ENCODE measurements at regions of chr1 and their contacts with region 1.

Region 1: GRCh38 chr1:72284348-72285073 is 2.2 kb upstream of the NEGR1 start:
- DNase-seq: peak; percentile 12
- H3K4me3 Mint-ChIP-seq: no peak overlapping the region
- H3K27ac Mint-ChIP-seq: no peak overlapping the region
- H3K4me1 Mint-ChIP-seq: peaks cover 6% of the 10 kb centered on the region
- H3K27me3 Mint-ChIP-seq: peaks cover 30% of the 10 kb centered on the region

Region 2: DNA sequence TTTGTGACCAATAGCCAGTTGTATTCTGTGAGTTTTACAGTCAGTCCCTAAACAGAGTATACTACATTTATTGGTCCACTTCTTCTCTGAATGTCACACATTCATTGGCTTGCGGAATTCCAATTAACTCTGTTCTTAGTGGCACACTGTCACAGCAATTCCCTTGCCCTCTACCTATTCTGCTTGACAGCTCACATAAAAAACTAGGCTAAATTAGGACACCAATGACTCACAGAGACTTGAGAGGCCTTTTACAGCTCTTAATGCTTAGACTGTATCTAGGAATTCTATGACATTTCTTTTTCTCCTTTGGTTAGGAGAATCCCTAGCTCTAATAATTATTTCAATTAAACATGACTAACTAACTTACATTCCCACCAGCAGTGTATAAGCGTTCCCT is 106.2 kb before region 1 on chr1:
- intact Hi-C with region 1: no loop called
- DNase-seq: no peak
- H3K4me3 Mint-ChIP-seq: no peak overlapping the region
- H3K27ac Mint-ChIP-seq: no peak overlapping the region
- H3K4me1 Mint-ChIP-seq: no peaks in the 10 kb centered on the region
- H3K27me3 Mint-ChIP-seq: no peaks in the 10 kb centered on the region

Region 3: DNA sequence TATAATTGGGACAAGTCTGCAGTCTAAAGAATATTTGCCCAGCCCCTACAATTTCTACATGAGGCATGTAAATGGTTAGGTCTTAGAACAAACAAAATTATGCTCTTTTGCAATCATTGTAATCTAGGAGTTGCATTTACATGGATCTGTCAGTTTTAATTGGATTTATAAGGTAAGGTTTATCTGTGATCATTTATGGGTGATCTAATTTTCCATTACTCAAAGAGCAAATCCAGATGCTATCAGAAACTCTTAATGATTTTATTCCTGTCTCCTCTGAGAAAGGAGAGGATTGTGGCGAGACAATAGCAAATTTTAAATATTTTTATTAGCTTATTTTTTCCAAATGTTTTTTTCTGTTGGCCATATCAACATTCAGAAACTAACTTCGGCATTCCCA is 12.0 kb after region 1 on chr1:
- intact Hi-C with region 1: loop called (anchors 1 kb)
- DNase-seq: no peak
- H3K4me3 Mint-ChIP-seq: no peak overlapping the region
- H3K27ac Mint-ChIP-seq: no peak overlapping the region
- H3K4me1 Mint-ChIP-seq: no peaks in the 10 kb centered on the region
- H3K27me3 Mint-ChIP-seq: no peaks in the 10 kb centered on the region

Region 4: DNA sequence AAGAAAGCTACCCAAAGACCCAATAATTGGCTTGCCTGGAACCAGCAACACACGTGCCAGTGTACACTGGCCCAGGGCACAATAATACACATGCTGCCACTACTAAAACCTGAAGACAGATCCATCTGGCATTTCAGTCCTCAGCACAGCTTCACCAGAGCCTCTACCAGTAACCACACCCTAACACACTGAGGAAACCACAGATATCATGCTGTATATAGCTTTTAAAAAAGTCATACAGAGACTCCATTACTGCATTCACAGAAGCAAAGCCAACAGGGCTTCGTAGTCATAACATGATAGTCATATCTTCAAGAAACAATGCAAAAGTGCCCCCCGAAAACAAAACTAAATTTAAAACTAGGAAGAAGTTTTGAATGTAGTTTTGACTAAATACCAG is 38.4 kb after region 1 on chr1:
- intact Hi-C with region 1: loop called (anchors 1 kb)
- DNase-seq: no peak
- H3K4me3 Mint-ChIP-seq: no peak overlapping the region
- H3K27ac Mint-ChIP-seq: no peak overlapping the region
- H3K4me1 Mint-ChIP-seq: peaks cover 2% of the 10 kb centered on the region
- H3K27me3 Mint-ChIP-seq: no peaks in the 10 kb centered on the region